ENCODE measurements at regions of chr5 and their contacts with region 1.

Region 1: GRCh38 chr5:69093771-69094482 is at the start of gene SLC30A5:
- DNase-seq: peak; percentile 99
- H3K4me3 Mint-ChIP-seq: peak within 1 kb of the TSS; percentile 97
- H3K27ac Mint-ChIP-seq: peak within 1 kb of the TSS; percentile 94
- H3K4me1 Mint-ChIP-seq: peaks cover 44% of the 10 kb centered on the region
- H3K27me3 Mint-ChIP-seq: no peaks in the 10 kb centered on the region
- total RNA-seq, gene SLC30A5: 60.8 and 67.4 TPM in 2 replicates

Region 2: GRCh38 chr5:68215208-68215897 is 878.6 kb before region 1 on chr5 and contains the start of gene PIK3R1:
- intact Hi-C with region 1: loop called (anchors 2 kb)
- DNase-seq: peak; percentile 88
- H3K4me3 Mint-ChIP-seq: peak within 1 kb of the TSS; percentile 91
- H3K27ac Mint-ChIP-seq: peak within 1 kb of the TSS; percentile 93
- H3K4me1 Mint-ChIP-seq: peaks cover 37% of the 10 kb centered on the region
- H3K27me3 Mint-ChIP-seq: no peaks in the 10 kb centered on the region
- total RNA-seq, gene PIK3R1: 43.3 and 46.2 TPM in 2 replicates

Region 3: DNA sequence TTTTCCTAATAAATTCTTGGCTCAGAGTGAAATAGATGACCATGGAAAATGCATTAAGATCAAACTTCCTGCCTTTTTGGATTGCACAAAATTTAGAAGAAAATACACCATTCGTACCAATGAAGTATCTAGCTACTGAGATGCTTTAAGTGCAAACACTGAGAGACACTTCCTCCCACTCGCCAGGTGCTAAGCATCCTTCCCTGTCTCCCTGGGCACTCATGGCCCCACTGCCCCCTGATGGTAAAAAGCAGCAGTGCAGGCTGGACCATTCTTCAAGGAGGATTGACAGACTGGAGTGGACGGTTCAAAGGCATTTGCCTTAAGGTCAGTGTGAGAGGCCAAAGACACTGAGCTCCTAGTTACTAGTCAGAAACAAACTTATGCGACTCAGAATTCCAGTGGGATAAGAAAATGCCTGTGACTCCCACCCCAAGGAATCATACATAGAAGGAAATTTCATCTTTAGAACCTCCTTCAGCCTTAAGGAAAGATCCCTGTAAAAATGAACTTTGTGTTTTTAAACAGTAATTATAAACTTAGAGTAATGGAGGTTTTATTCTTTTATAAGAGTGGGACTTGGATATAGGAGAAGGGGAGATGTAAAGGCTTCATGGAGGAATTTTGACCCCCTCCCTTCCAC is 86.1 kb before region 1 on chr5:
- intact Hi-C with region 1: no loop called
- DNase-seq: peak; percentile 49
- H3K4me3 Mint-ChIP-seq: no peak overlapping the region
- H3K27ac Mint-ChIP-seq: no peak overlapping the region
- H3K4me1 Mint-ChIP-seq: no peaks in the 10 kb centered on the region
- H3K27me3 Mint-ChIP-seq: peaks cover 16% of the 10 kb centered on the region

Region 4: DNA sequence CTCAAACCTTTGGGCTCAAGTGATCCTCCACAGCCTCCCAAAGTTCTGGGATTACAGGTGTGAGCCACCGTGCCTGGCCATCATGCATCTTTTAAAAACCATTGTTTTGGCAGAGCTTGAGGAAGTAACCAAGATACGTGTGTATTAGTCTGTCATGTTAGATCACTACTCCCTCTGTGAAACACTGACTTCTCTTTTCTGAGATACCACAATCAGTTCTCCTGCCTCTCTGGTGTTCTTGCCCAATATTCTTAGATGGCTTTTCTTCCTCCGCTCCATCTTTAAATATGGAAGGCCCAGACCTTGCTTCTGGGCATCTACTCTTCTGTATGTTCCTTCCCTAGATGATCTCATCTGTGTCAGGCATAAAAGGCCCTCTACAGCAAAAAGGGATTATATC is 58.8 kb after region 1 on chr5:
- intact Hi-C with region 1: no loop called
- DNase-seq: no peak
- H3K4me3 Mint-ChIP-seq: no peak overlapping the region
- H3K27ac Mint-ChIP-seq: no peak overlapping the region
- H3K4me1 Mint-ChIP-seq: no peaks in the 10 kb centered on the region
- H3K27me3 Mint-ChIP-seq: peaks cover 2% of the 10 kb centered on the region

Region 5: DNA sequence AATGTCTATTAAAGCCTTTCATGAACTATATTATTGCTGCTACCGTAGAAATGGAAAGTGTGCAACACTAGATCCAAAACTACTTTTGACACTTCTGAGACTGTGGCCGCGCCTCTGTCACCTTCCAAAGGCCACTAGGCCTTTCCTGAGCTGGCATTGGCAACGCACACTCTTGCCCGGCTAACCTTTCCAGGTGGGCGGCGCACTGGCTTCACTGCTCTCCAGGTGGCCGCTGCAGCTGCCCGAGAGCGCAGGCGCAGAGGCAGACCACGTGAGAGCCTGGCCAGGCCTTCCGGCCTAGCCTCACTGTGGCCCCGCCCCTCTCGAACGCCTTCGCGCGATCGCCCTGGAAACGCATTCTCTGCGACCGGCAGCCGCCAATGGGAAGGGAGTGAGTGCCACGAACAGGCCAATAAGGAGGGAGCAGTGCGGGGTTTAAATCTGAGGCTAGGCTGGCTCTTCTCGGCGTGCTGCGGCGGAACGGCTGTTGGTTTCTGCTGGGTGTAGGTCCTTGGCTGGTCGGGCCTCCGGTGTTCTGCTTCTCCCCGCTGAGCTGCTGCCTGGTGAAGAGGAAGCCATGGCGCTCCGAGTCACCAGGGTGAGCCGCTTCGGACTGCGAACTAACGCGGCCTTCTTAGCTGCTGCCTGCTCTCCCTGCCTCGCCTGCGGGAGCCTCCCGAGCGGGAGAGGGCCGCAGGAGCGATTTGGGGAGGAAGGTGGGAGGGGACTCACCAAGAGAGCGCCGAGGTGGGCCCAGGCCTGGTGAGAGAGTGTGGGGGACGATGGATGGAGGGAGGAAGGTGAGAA is 73.0 kb after region 1 on chr5 and contains the start of gene CCNB1:
- intact Hi-C with region 1: loop called (anchors 1 kb)
- DNase-seq: peak; percentile 99
- H3K4me3 Mint-ChIP-seq: peak within 1 kb of the TSS; percentile 90
- H3K27ac Mint-ChIP-seq: peak within 1 kb of the TSS; percentile 83
- H3K4me1 Mint-ChIP-seq: peaks cover 45% of the 10 kb centered on the region
- H3K27me3 Mint-ChIP-seq: no peaks in the 10 kb centered on the region
- total RNA-seq, gene CCNB1: 106 and 115 TPM in 2 replicates

Region 6: DNA sequence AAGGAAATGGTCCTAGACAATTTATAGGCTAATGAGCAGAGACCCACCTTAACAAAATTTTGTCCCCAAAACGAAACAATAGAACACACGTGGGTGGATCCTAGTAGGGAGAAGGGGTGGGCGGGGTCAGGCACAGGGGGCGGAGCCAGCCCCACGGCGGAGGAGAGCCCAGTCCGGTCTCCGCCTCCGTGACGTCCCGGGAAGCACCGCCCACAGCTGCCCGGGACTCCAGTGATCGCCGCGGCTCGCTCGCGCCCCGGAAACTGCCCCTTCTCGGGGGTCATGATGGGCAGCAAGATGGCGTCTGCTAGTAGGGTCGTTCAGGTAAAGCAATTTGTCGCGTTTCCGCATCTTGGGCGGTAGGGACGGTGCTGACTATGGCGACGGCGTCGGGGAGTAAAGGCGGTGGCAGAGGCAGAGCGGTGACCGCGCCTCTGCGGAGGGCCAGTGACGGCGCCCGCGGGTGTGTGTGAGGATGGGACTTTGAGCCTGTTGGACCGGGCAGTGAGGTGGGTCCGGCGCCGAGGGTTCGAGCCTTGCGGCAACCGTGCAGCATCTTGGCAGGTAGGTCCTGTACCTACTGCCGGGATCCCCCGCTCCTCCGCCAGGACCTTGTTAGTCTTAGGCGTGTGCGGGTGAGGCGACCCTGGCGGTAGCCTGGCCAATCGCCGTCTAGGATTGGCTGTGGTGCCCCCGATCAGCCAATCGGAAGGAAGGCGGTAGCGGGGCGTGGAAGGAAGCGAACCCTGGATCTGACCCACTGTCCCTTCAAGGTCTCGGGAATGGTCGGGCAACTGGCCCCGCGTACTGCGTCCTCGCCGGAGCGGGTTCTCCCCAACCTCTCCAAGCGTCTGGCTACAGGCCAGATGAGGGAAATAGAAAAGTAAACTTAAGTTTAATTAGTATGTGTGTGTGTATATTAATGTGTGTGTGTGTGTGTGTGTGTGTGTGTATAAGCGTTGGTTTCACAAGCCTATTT is 123.9 kb after region 1 on chr5:
- intact Hi-C with region 1: loop called (anchors 1 kb)
- DNase-seq: peak; percentile 90
- H3K4me3 Mint-ChIP-seq: peak overlapping the region; percentile 98
- H3K27ac Mint-ChIP-seq: peak overlapping the region; percentile 95
- H3K4me1 Mint-ChIP-seq: peaks cover 15% of the 10 kb centered on the region
- H3K27me3 Mint-ChIP-seq: no peaks in the 10 kb centered on the region

Region 7: DNA sequence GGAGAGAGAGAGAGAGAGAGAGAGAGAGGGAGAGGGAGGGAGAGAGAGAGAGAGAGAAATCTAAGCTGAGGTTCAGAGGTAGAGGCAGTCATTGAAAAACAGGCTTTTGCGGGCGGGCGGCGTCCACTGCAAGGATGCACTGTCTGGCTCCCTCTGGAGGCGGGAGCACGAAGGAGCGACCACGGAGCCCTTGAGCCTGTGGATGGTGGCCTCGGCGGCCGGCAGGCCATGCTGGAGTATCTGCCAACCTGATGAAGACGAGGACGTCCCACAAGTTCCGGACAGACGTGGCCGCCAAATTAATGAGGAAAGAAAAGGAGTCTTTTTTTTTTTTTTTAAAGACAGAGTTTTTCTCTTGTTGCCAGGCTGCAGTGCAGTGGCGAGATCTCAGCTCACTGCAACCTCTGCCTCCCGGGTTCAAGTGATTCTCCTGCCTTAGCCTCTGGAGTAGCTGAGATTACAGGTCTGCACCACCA is 240.9 kb after region 1 on chr5:
- intact Hi-C with region 1: loop called (anchors 1 kb)
- DNase-seq: peak; percentile 69
- H3K4me3 Mint-ChIP-seq: no peak overlapping the region
- H3K27ac Mint-ChIP-seq: peak overlapping the region; percentile 55
- H3K4me1 Mint-ChIP-seq: peaks cover 17% of the 10 kb centered on the region
- H3K27me3 Mint-ChIP-seq: peaks cover 2% of the 10 kb centered on the region

Measured in activated T-helper 1 cell treated with anti-CD3 and anti-CD28 coated beads, Interleukin-12 subunit alpha, Interleukin-12 subunit beta, Interleukin-2, Interleukin-4 antibody, amounts not matched to agents 30 ng/mL and 10 ng/mL and 1 ng/mL, durations not matched to agents 14 hours and 24 hours and 36 hours (primary cell).